ENCODE measurements at regions of chr3 and their contacts with region 1.

Region 1: DNA sequence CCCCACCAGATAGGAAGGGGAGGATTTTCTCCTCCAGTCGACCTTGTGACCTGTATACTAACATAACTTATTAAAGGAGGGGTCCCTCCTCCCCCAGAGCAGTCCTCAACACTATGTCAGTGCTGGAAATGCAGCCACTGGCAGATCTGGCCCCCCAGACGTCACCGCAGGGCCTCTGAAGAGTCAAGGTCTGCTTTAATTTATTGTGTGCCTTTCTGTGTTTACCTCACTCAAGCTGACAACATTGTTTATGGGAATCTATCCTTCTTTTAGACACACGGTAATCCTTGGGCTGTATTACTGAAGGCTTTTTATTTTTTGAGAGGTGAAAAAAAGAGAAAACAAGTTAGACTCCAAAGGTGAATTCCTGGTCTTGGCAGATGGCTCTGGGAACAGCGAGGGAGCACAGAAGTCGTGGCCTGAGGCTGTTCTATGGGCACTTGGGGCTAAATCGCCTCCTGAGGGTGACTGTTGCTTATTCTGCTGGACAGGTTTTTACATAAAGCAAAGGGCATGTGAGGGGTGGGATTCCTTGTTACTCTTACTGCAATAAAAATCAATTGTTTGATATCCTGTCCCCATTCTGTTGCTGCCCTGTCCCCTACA is 13.5 kb upstream of the NR2C2 start:
- DNase-seq: no peak
- ATAC-seq: no peak
- H3K4me3 ChIP-seq: no peak overlapping the region
- H3K27ac ChIP-seq: no peak overlapping the region
- H3K4me1 ChIP-seq: no peaks in the 10 kb centered on the region
- H3K27me3 ChIP-seq: no peaks in the 10 kb centered on the region
- CTCF ChIP-seq: no peak
- POLR2A ChIP-seq: no peak

Region 2: GRCh38 chr3:14969671-14970070 is 35.7 kb after region 1 on chr3:
- in situ Hi-C with region 1: no loop called
- intact Hi-C with region 1: loop called (anchors 1 kb)
- DNase-seq: no peak
- ATAC-seq: no peak
- H3K4me3 ChIP-seq: no peak overlapping the region
- H3K27ac ChIP-seq: no peak overlapping the region
- H3K4me1 ChIP-seq: no peaks in the 10 kb centered on the region
- H3K27me3 ChIP-seq: no peaks in the 10 kb centered on the region
- CTCF ChIP-seq: no peak
- POLR2A ChIP-seq: no peak

Region 3: DNA sequence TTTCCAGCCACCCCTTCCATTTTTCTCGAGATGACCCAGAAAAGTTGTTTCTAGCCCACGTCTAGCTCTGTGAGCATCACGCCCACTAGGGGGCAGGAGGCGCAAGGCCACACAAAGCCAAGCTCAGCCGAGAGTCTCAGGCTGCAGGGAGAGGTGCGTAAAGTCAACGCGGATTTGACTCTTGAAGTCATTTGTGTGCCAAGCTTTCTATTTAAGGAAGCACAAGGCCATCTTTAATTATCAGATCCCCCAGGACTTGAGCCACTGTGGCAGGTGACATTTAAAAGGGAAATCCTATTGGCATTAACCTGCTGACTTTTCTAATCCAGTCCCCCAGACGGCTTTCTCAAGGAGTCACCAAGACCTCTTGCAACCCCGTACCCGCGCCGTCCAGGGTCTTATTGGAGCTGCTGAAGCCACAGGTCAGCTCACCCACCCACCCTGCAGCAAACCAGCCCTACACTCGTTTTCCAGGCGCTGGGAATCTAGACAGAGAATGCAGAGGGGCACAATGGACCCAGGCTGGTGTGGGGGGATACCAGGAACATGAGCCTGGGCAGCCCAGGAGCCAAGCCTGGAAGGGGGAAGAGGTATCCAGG is 334.2 kb after region 1 on chr3:
- in situ Hi-C with region 1: no loop called
- intact Hi-C with region 1: no loop called
- DNase-seq: peak; percentile 74 to 85
- ATAC-seq: peak; percentile 75 to 82
- H3K4me3 ChIP-seq: peak overlapping the region in 1 of 4 donors; percentile 1
- H3K27ac ChIP-seq: peak overlapping the region; percentile 73 to 81 (median 74)
- H3K4me1 ChIP-seq: peaks cover 46 to 57% of the 10 kb centered on the region in 2 donors
- H3K27me3 ChIP-seq: no peaks in the 10 kb centered on the region
- CTCF ChIP-seq: peak; percentile 94 to 97 (median 96)
- POLR2A ChIP-seq: no peak

Measured in gastrocnemius medialis (tissue), 4 donors.